ENCODE measurements at regions of chr19 and their contacts with region 1.

Region 1: GRCh38 chr19:43463381-43464136 is 1.8 kb downstream of the LYPD3 start:
- DNase-seq: peak; percentile 98 to 100 (median 99)
- H3K4me3 ChIP-seq: peak overlapping the region; percentile 94
- H3K4me3 Mint-ChIP-seq: peak overlapping the region; percentile 89 to 97 (median 93)
- H3K27ac ChIP-seq: peak overlapping the region; percentile 80
- H3K27ac Mint-ChIP-seq: peak overlapping the region; percentile 94 to 99 (median 97)
- H3K4me1 ChIP-seq: peaks cover 31% of the 10 kb centered on the region
- H3K4me1 Mint-ChIP-seq: peaks cover 29 to 51% (median 33%) of the 10 kb centered on the region in 3 donors
- H3K27me3 ChIP-seq: no peaks in the 10 kb centered on the region
- H3K27me3 Mint-ChIP-seq: no peaks in the 10 kb centered on the region

Region 2: GRCh38 chr19:43438291-43439096 is 25.1 kb before region 1 on chr19:
- CTCF ChIA-PET with region 1: interaction called, 8 read pairs
- POLR2A ChIA-PET with region 1: interaction called, 20 read pairs
- DNase-seq: no peak
- H3K4me3 ChIP-seq: peak overlapping the region; percentile 68
- H3K4me3 Mint-ChIP-seq: peak overlapping the region in 6 of 7 donors; percentile 13 to 74 (median 64)
- H3K27ac ChIP-seq: peak overlapping the region; percentile 87
- H3K27ac Mint-ChIP-seq: peak overlapping the region; percentile 77 to 96 (median 94)
- H3K4me1 ChIP-seq: peaks cover 39% of the 10 kb centered on the region
- H3K4me1 Mint-ChIP-seq: peaks cover 44 to 58% (median 55%) of the 10 kb centered on the region in 3 donors
- H3K27me3 ChIP-seq: no peaks in the 10 kb centered on the region
- H3K27me3 Mint-ChIP-seq: no peaks in the 10 kb centered on the region

Region 3: GRCh38 chr19:43474986-43475705 is 11.6 kb after region 1 on chr19:
- CTCF ChIA-PET with region 1: interaction called, 8 read pairs
- POLR2A ChIA-PET with region 1: interaction called, 14 read pairs
- DNase-seq: peak; percentile 91 to 97 (median 95)
- H3K4me3 ChIP-seq: peak overlapping the region; percentile 70
- H3K4me3 Mint-ChIP-seq: peak overlapping the region; percentile 69 to 87 (median 82)
- H3K27ac ChIP-seq: peak overlapping the region; percentile 69
- H3K27ac Mint-ChIP-seq: peak overlapping the region; percentile 81 to 99 (median 96)
- H3K4me1 ChIP-seq: peaks cover 33% of the 10 kb centered on the region
- H3K4me1 Mint-ChIP-seq: peaks cover 7 to 20% (median 13%) of the 10 kb centered on the region in 3 donors
- H3K27me3 ChIP-seq: no peaks in the 10 kb centered on the region
- H3K27me3 Mint-ChIP-seq: peaks cover 0 to 1% of the 10 kb centered on the region in 2 donors

Region 4: DNA sequence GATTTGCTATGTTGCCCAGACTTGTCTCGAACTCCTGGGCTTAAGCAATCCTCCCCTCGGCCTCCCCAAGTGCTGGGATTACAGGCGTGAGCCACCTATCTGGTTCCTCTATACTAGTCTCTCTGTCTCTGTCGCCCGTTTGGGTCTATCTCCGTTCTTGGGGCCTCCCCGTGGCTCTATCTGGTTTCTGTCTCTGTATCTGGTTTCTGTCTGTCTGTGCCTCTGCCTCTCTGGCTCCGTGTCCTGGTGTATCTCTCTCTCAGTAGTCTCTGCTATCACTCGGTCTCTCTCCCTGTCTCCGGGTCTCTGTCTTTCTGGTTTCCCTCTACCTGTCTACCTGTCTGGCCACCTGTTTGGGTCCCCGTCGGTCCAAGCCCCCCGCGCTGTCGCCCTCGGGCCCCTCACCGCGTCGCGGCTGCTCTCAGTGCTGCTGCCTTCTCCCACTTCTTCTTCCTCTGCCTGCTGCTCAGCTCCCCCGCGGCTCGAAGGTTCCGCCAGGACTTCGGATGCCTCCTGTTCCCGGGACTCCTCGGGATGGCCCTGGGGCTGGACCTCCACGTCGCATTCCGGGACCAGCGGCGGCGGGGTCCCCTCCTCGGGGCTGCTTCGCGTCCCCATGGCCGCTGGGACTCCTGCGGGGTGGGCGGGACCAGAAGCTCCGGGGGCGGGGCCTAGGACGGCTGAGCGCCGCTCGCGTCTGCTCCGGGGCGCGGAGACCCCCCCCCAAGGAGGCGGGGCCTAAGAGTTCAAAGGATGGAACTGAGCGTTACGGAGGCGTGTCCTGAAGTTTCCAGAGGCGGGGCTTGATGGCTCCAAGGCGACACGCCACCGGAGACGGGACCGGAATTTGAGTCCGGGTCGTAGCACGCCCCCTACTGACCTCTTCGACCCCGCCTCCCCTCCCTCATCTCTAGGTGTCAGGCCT is 40.2 kb after region 1 on chr19:
- CTCF ChIA-PET with region 1: interaction called, 3 read pairs
- POLR2A ChIA-PET with region 1: interaction called, 35 read pairs
- DNase-seq: peak; percentile 96 to 100 (median 99)
- H3K4me3 ChIP-seq: peak overlapping the region; percentile 96
- H3K4me3 Mint-ChIP-seq: peak overlapping the region; percentile 89 to 95 (median 93)
- H3K27ac ChIP-seq: peak overlapping the region; percentile 87
- H3K27ac Mint-ChIP-seq: peak overlapping the region; percentile 88 to 100 (median 96)
- H3K4me1 ChIP-seq: peaks cover 17% of the 10 kb centered on the region
- H3K4me1 Mint-ChIP-seq: peaks cover 23 to 47% (median 32%) of the 10 kb centered on the region in 3 donors
- H3K27me3 ChIP-seq: no peaks in the 10 kb centered on the region
- H3K27me3 Mint-ChIP-seq: no peaks in the 10 kb centered on the region

Measured in CD8-positive, alpha-beta memory T cell (primary cell).